A673 (cell line): ENCODE measurements at regions of chr15 and their contacts with region 1.

Region 1: DNA sequence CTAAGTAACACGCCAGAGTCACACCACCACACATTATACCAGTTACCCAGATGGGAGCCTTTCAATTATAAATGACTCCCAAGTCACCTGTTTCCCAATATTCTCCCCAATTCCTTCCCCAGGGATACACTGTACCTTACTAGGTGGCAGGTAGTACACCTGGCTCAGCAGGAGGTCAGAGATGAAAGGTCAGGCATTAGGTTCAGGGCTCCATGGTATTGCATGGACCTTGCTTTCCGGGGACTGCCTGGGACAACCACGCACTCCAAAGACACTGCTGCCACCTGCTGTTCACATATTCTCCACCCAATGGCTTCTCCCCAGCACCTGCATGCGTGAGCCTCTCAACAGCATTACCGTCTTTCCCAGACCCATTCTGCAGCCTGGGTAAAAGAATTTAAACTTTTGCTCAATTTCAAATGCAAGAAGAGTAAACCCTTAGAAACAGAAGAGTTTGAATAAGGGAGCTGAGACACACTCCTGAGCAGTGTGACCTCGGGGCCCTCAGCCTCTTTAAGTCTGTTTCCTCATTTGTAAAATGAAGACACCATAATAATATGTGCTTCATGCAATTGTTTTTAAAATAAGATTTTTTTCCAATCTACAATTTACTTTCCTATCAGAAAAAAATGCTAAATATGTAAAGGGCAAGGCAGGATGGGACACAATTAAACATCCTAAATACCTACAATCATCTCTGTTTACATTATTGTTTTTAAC is 28.0 kb upstream of the LACTB start:
- DNase-seq: peak; percentile 70
- H3K4me3 ChIP-seq: no peak overlapping the region
- H3K27ac ChIP-seq: no peak overlapping the region
- H3K4me1 ChIP-seq: no peaks in the 10 kb centered on the region
- H3K27me3 ChIP-seq: no peaks in the 10 kb centered on the region
- CTCF ChIP-seq: peak; percentile 82

Region 2: GRCh38 chr15:62782039-62782791 is 311.4 kb before region 1 on chr15:
- CTCF ChIA-PET with region 1: interaction called, 6 read pairs
- POLR2A ChIA-PET with region 1: no interaction called
- intact Hi-C with region 1: loop called (anchors 1 kb)
- DNase-seq: peak; percentile 78
- H3K4me3 ChIP-seq: no peak overlapping the region
- H3K27ac ChIP-seq: no peak overlapping the region
- H3K4me1 ChIP-seq: no peaks in the 10 kb centered on the region
- H3K27me3 ChIP-seq: no peaks in the 10 kb centered on the region
- CTCF ChIP-seq: peak; percentile 62

Region 3: DNA sequence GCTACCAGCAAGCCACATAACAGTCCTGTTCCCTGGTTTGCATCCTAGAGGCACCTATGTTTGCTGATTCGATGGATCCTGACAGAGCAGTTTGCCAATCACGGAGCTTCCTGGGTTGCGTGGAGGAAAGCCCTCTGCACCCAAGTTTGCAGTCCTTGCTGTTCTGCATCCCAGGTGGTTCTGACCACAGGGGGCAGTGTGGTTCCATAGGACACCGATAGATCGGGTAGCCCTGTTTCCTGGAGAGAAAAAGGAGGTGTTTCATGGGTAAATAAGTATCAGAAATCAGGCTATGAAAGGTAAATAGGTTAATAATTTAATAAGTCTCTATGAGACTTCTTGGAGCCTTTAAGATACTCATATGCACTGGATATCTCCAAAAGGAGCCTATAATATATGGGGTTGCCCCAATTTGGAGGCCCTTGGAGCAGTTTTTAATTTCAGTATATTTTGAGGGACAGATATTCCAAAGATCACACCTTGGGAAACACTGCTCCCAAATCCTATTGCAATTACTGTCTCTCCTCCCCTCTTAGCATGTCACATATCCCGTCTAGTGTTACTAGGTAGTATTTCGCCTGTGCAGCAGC is 245.7 kb before region 1 on chr15:
- CTCF ChIA-PET with region 1: no interaction called
- POLR2A ChIA-PET with region 1: no interaction called
- intact Hi-C with region 1: loop called (anchors 1 kb)
- DNase-seq: peak; percentile 39
- H3K4me3 ChIP-seq: no peak overlapping the region
- H3K27ac ChIP-seq: no peak overlapping the region
- H3K4me1 ChIP-seq: no peaks in the 10 kb centered on the region
- H3K27me3 ChIP-seq: no peaks in the 10 kb centered on the region
- CTCF ChIP-seq: peak; percentile 76

Region 4: DNA sequence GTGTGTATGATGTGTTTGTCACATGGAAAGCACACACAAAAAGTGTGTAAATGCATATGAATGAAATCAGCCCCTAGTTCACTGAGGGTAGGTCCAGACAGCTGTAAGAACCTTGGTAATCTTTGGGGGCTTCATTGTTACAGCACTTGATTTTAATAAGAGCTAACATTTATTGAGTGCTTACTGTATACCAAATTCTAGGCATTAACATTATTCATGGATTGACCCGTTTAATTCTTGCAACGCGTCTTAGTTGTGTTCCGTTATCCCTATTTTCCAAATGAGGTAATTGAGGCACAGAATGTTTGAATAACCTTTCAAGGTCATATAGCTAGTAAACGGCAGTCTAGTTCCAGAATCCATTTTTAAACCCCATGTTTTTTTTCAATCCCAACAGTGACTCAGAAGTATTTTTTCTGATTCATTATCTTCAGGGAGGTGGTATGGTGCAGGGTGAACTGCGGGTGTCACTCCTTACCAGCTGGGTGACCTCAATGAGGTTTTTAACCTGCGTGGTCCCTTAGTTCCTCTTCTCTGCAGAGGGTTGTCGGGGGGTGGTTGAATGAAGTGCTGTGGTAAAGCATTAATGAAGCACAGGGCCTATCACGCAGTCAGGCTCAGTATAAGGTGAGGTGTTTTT is 109.9 kb after region 1 on chr15:
- CTCF ChIA-PET with region 1: no interaction called
- POLR2A ChIA-PET with region 1: no interaction called
- intact Hi-C with region 1: no loop called
- DNase-seq: no peak
- H3K4me3 ChIP-seq: no peak overlapping the region
- H3K27ac ChIP-seq: no peak overlapping the region
- H3K4me1 ChIP-seq: peaks cover 13% of the 10 kb centered on the region
- H3K27me3 ChIP-seq: no peaks in the 10 kb centered on the region
- CTCF ChIP-seq: no peak

Region 5: GRCh38 chr15:63332367-63333124 is 238.9 kb after region 1 on chr15:
- CTCF ChIA-PET with region 1: no interaction called
- POLR2A ChIA-PET with region 1: no interaction called
- intact Hi-C with region 1: no loop called
- DNase-seq: peak; percentile 76
- H3K4me3 ChIP-seq: no peak overlapping the region
- H3K27ac ChIP-seq: no peak overlapping the region
- H3K4me1 ChIP-seq: peaks cover 4% of the 10 kb centered on the region
- H3K27me3 ChIP-seq: no peaks in the 10 kb centered on the region
- CTCF ChIP-seq: no peak

Region 6: DNA sequence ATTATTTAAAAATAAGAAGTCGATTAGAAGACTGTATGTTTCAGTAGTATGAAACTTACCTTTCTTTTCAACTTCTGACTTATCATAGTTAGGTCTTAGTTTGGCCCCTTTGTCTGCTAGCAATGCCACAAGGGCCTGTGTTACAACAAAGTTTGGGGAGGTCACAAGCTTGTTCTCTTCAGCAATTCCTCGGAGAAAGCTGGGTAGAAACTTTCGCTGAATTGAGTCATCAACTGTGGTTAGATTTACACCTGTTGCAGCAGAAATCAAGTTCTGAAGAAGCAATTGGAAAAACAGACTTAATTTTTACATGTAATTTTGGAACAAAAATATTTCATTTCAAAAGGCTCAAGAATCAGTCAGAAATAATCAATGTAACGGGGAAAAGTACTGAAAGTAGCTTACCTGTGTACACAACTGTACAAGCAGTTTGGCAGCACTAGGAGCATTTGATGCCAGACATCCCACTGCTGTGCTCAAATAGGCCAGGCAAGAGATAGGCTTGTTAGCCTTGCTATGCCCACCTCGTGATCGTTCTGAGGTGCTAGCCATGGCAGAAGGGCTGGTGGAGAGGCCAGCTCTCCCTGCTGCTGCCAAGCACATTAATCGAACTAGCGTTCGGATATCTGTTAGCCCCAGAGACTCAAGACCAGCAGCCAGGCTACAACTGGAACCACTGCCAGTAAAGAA is 562.2 kb after region 1 on chr15:
- CTCF ChIA-PET with region 1: no interaction called
- POLR2A ChIA-PET with region 1: no interaction called
- intact Hi-C with region 1: no loop called
- DNase-seq: no peak
- H3K4me3 ChIP-seq: no peak overlapping the region
- H3K27ac ChIP-seq: no peak overlapping the region
- H3K4me1 ChIP-seq: no peaks in the 10 kb centered on the region
- H3K27me3 ChIP-seq: no peaks in the 10 kb centered on the region
- CTCF ChIP-seq: no peak